ENCODE measurements at regions of chr1 and their contacts with region 1.

Region 1: DNA sequence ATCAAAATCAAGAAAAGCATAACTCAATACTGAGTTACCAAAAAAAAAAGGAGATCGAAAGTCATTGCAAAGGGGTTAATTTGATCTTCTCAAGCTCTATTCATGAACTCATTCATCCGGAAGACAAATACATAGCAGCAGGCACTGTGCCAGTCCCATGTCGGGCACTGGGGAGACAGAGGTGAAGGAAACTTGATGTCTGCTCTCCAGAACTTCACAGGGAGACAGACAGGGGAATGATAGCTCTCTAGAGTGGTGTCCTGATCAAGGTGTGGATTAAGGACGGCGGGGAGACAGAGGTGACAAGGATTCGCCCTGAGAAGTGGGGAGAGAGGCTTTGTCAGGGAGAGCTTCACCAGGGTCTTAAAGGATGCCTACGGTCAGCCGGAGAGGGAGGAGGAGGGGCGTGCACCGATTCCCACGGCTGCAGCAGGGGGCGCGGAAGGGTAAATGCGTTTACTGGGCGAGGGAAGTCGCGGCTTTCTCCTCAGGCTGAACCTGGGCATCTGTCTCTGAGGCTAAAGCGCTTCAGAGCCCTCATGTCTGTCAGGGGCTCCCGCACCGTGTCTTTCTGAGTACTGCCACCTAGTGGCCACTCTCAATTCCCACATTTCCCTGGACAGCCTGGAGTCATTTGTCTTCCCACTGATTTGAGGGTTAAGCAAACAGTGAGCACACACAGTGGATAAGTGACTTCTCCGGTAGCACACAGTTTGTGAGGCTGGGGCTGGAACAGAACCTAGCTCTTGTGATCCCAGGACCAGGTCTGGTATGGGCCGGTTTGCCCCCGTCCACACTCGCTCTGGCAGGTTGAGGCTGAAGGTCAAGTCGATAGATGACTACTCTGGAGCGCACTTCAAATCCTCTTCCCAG is 152.8 kb downstream of the TENT5C start:
- DNase-seq: peak; percentile 53
- ATAC-seq: peak; percentile 96

Region 2: DNA sequence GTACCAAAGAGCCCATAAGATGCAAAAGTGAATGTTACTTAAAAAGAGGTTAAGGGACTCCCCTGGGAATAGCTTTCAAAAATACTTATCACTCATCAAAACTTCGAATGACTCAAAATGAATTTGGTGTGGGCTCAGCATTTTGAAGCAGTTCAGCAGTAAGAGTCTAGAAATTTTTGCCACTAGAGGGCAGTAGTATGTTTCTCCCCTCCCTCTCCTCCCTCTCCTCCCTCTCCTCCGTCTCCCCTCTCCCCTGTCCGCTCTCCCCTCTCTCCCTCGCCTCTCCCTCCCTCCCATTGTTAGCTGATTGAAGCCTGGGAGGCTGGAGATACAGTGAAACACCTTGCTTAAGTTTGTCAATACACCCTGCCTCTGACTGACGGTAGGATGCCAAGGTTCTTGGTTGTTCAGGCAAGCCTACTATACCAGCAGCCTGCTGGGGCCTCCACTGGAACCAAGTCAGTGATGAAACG is 223.6 kb before region 1 on chr1:
- intact Hi-C with region 1: loop called (anchors 5 kb)
- DNase-seq: no peak
- ATAC-seq: peak; percentile 95

Region 3: DNA sequence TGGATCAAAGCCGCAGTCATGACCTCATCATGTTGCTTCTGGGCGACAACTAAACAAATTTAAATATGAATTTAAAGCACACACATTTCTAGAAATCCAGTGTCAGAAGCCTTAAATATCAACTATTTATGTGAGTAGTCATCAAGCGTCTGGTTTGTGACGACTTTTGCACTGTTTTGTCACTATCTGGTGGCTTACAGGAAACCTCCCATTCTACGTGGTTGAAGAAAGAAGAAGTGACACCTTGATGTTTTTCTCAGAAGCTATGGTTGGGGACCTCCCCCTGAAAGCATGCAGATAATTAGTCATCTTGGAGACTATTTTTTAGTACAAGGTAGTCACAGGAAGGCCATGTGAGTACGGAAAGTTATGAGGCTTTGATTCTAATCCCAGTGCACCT is 94.4 kb before region 1 on chr1:
- intact Hi-C with region 1: loop called (anchors 10 kb)
- DNase-seq: no peak
- ATAC-seq: no peak

Region 4: GRCh38 chr1:117895482-117896114 is 136.9 kb after region 1 on chr1:
- intact Hi-C with region 1: loop called (anchors 10 kb)
- DNase-seq: no peak
- ATAC-seq: no peak